ENCODE measurements at regions of chr13 and their contacts with region 1.

Region 1: GRCh38 chr13:111006506-111007031 is 91.7 kb upstream of the ANKRD10 start:
- DNase-seq: peak; percentile 72 to 93 (median 86)
- ATAC-seq: peak; percentile 90
- H3K4me3 ChIP-seq: no peak overlapping the region
- H3K27ac ChIP-seq: peak overlapping the region; percentile 80 to 90 (median 88)
- H3K4me1 ChIP-seq: peaks cover 23% of the 10 kb centered on the region
- H3K27me3 ChIP-seq: no peaks in the 10 kb centered on the region
- CTCF ChIP-seq: no peak
- POLR2A ChIP-seq: peak in 2 of 3 donors; percentile 36 to 41

Region 2: DNA sequence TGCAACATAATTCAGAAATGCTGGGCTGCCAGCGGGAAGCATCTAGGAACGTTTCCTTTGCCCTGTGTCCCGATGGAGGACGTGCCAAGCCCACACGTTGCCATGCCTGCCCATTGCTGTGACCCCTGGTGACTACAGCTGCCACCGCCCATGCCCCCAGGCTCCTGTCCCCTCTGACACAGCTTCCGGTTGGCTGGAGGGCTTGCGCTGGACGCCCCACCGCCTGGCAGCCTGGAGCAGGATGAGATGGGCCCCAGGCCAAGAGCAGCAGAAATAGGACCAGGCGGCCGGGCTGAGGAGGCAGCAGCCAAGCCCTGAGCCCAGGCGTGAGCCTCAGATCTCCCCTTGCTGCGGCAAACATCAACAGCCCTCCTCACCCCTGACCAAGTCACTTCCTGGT is 573.6 kb before region 1 on chr13:
- intact Hi-C with region 1: no loop called
- DNase-seq: no peak
- ATAC-seq: peak; percentile 42
- H3K4me3 ChIP-seq: no peak overlapping the region
- H3K27ac ChIP-seq: no peak overlapping the region
- H3K4me1 ChIP-seq: no peaks in the 10 kb centered on the region
- H3K27me3 ChIP-seq: no peaks in the 10 kb centered on the region
- CTCF ChIP-seq: no peak
- POLR2A ChIP-seq: no peak

Region 3: DNA sequence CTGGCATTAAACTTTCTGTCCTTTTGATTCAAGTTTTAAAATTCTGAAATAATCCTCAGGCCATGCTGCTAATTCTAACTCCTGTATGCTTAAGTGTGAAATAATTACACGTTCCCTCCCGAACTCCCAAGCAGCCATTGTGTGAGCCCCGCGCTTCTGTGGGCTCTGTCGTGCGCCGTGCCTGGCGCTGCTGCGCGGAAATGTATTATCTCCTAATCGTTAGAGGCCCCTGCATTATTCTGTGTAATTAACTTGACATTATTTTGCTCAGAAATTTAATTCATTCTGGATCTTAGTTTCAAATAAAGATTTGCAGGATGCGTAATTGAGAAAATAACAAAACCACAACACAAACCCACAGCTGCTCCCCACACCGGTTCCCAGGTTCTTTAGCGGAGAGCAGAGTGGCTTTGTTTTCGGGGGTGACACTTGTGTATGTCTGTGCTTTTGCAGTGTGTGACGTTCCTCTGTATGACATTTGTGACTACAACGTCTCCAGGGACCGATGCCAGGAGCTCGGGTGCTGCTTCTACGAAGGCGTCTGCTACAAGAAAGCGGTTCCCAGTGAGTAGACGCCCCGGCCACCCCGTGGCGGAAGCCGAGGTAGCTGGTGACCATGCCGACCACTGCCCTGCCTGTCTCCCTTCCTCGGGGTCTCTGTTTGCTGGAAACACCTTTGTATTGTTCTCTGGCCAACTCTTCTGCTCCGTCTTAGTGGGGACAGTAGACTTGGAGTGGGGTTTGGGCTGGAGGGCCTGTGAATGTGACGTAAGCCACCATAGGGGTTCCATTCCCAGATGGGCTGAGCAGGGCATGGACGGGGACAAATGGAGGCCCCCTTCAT is 321.4 kb after region 1 on chr13:
- intact Hi-C with region 1: no loop called
- DNase-seq: no peak
- ATAC-seq: no peak
- H3K4me3 ChIP-seq: no peak overlapping the region
- H3K27ac ChIP-seq: no peak overlapping the region
- H3K4me1 ChIP-seq: no peaks in the 10 kb centered on the region
- H3K27me3 ChIP-seq: no peaks in the 10 kb centered on the region
- CTCF ChIP-seq: no peak
- POLR2A ChIP-seq: no peak

Region 4: DNA sequence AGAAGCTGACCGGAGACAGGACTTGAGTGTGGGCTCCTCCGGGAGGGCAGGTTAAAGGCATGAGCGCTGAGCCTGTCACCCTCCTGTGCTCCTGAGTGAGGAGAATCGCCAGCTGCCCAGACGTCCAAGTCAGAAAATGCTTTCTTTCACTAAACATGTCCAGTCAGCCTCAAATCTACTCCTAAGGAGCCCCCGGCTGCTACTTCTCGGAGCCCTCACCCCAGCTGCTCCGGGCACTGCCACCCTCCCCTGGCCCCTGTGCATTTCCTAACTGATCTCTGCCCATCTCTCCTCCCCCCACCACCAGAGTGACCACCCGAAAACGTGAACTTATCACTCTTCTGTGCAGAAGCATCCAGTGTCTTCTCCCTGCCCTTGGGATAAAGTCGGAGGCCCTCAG is 782.9 kb after region 1 on chr13:
- intact Hi-C with region 1: no loop called
- DNase-seq: no peak
- ATAC-seq: no peak
- H3K4me3 ChIP-seq: no peak overlapping the region
- H3K27ac ChIP-seq: no peak overlapping the region
- H3K4me1 ChIP-seq: no peaks in the 10 kb centered on the region
- H3K27me3 ChIP-seq: no peaks in the 10 kb centered on the region
- CTCF ChIP-seq: no peak
- POLR2A ChIP-seq: no peak

Region 5: DNA sequence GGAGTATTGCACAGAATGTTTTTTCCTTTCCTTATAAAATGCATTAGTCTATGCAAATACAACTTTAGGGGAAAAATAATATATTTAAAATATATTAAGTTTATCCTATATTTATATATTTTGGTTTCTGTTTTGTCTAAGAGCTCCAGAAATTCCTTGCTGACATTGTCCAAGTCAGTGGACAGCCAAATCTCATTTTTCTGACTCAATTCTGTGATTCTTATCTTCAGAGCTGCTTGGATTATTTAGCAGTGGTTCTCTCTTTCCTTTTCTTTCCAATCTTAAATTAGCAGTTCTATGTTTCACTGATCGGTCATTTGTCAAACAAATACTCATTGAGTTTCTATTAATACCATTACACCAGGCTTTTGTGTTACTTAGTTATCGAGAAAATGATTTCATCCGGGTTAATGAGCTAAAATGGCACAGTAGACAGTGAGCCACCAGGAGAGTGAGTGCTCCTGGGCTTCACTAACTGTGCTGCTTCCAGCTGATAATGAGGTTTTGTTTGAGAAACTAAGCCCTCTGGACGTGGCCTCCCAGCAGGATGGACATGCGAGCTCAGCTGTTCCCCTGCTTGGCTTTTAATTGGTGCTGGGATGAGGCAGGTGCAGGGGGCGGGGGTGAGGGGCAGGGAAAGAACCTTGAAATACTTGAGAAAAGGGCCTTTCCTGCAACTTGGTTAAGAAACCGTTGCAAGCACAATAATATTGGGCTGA is 1727.3 kb after region 1 on chr13:
- intact Hi-C with region 1: loop called (anchors 10 kb)
- DNase-seq: peak in 1 of 4 donors; percentile 29
- ATAC-seq: peak; percentile 30
- H3K4me3 ChIP-seq: no peak overlapping the region
- H3K27ac ChIP-seq: peak overlapping the region in 2 of 4 donors; percentile 49 to 54
- H3K4me1 ChIP-seq: peaks cover 6% of the 10 kb centered on the region
- H3K27me3 ChIP-seq: no peaks in the 10 kb centered on the region
- CTCF ChIP-seq: no peak
- POLR2A ChIP-seq: no peak

Measured in body of pancreas (tissue), 4 donors.